Mammary epithelial cell (primary cell): ENCODE measurements at regions of chr20 and their contacts with region 1.

Region 1: GRCh38 chr20:62793912-62794724 is 2.2 kb upstream of the MRGBP start:
- DNase-seq: peak; percentile 94
- H3K4me3 ChIP-seq: peak overlapping the region; percentile 46 to 66 (median 51)
- H3K27ac ChIP-seq: peak overlapping the region; percentile 61
- H3K4me1 ChIP-seq: peaks cover 44% of the 10 kb centered on the region
- H3K27me3 ChIP-seq: no peaks in the 10 kb centered on the region
- CTCF ChIP-seq: no peak

Region 2: GRCh38 chr20:62407221-62407992 is 386.7 kb before region 1 on chr20 and contains the start of gene CABLES2:
- CTCF ChIA-PET with region 1: no interaction called
- dilution Hi-C with region 1: no loop called
- in situ Hi-C with region 1: no loop called
- intact Hi-C with region 1: loop called (anchors 5 kb)
- DNase-seq: peak; percentile 91
- H3K4me3 ChIP-seq: peak within 1 kb of the TSS; percentile 56 to 71 (median 69)
- H3K27ac ChIP-seq: no peak within 1 kb of the TSS
- H3K4me1 ChIP-seq: peaks cover 26% of the 10 kb centered on the region
- H3K27me3 ChIP-seq: no peaks in the 10 kb centered on the region
- CTCF ChIP-seq: no peak
- total RNA-seq, gene CABLES2: 2.3 to 4.4 TPM

Region 3: DNA sequence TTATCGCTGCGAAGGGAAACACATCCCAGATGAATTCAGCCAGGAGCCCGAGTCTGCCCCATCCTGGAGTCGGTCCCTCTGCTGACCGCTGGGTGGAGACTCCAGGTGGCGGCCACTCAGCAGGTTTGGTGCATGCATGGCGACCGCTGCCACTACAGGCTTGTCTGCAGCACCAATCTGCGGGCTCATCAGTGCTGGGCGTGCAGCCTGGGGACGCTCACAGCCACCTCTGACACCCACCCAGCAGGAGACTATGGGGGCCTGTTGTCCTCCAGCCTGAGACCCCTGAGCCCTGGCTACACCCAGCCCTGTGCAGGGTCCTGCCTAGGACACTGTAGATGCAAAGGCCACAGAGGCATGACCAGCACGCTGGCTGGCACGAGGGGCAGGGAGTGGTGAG is 277.8 kb before region 1 on chr20:
- CTCF ChIA-PET with region 1: no interaction called
- dilution Hi-C with region 1: no loop called
- in situ Hi-C with region 1: no loop called
- intact Hi-C with region 1: loop called (anchors 1 kb)
- DNase-seq: no peak
- H3K4me3 ChIP-seq: no peak overlapping the region
- H3K27ac ChIP-seq: no peak overlapping the region
- H3K4me1 ChIP-seq: no peaks in the 10 kb centered on the region
- H3K27me3 ChIP-seq: peaks cover 6% of the 10 kb centered on the region
- CTCF ChIP-seq: no peak

Region 4: GRCh38 chr20:62668441-62669027 is 125.6 kb before region 1 on chr20:
- CTCF ChIA-PET with region 1: interaction called, 3 read pairs
- dilution Hi-C with region 1: no loop called
- in situ Hi-C with region 1: loop called in 1 of 2 experiments (anchors 5 kb)
- intact Hi-C with region 1: loop called (anchors 1 kb)
- DNase-seq: peak; percentile 58
- H3K4me3 ChIP-seq: no peak overlapping the region
- H3K27ac ChIP-seq: no peak overlapping the region
- H3K4me1 ChIP-seq: peaks cover 24% of the 10 kb centered on the region
- H3K27me3 ChIP-seq: no peaks in the 10 kb centered on the region
- CTCF ChIP-seq: peak; percentile 82 to 89

Region 5: GRCh38 chr20:62704301-62704948 is 89.7 kb before region 1 on chr20:
- CTCF ChIA-PET with region 1: interaction called, 6 read pairs
- dilution Hi-C with region 1: no loop called
- in situ Hi-C with region 1: loop called in 1 of 2 experiments (anchors 25 kb)
- intact Hi-C with region 1: loop called (anchors 1 kb)
- DNase-seq: peak; percentile 97
- H3K4me3 ChIP-seq: no peak overlapping the region
- H3K27ac ChIP-seq: no peak overlapping the region
- H3K4me1 ChIP-seq: peaks cover 47% of the 10 kb centered on the region
- H3K27me3 ChIP-seq: peaks cover 2% of the 10 kb centered on the region
- CTCF ChIP-seq: peak in 1 of 2 donors; percentile 5

Region 6: GRCh38 chr20:63009045-63009961 is 215.2 kb after region 1 on chr20:
- CTCF ChIA-PET with region 1: no interaction called
- dilution Hi-C with region 1: no loop called
- in situ Hi-C with region 1: no loop called
- intact Hi-C with region 1: loop called (anchors 10 kb)
- DNase-seq: peak; percentile 55
- H3K4me3 ChIP-seq: no peak overlapping the region
- H3K27ac ChIP-seq: no peak overlapping the region
- H3K4me1 ChIP-seq: no peaks in the 10 kb centered on the region
- H3K27me3 ChIP-seq: peaks cover 55% of the 10 kb centered on the region
- CTCF ChIP-seq: peak; percentile 73 to 94